H1 (cell line): ENCODE measurements at regions of chr11 and their contacts with region 1.

Region 1: DNA sequence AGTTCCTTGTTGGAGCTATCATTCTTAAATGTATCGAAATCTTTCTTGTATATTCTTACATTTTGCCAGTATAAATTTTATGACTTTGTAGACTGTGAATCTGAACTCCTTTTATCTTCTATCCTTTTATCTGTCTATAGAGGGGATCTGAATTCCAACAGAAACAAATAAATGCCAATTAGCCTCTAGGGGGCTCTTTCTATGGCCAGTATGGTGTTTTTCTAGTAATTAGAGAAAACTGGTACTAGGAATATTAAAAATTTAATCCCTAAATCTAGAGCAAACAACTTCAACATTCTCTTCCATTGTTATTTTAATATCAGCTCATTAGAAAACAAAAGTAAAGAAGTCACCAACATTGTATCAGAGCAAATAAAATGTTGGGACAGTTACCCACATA is 21.5 kb upstream of the CAT start:
- DNase-seq: no peak
- H3K4me3 ChIP-seq: no peak overlapping the region
- H3K27ac ChIP-seq: no peak overlapping the region
- H3K4me1 ChIP-seq: no peaks in the 10 kb centered on the region
- H3K27me3 ChIP-seq: no peaks in the 10 kb centered on the region
- CTCF ChIP-seq: peak in 2 of 3 experiments; percentile 12 to 18; a peak in 2 of 4 replicates
- EP300 ChIP-seq: no peak
- POLR2A ChIP-seq: no peak
- RAD21 ChIP-seq: no peak

Region 2: GRCh38 chr11:34380696-34381095 is 36.5 kb before region 1 on chr11:
- CTCF ChIA-PET with region 1: no interaction called
- POLR2A ChIA-PET with region 1: no interaction called
- DNase-seq: no peak
- H3K4me3 ChIP-seq: no peak overlapping the region
- H3K27ac ChIP-seq: no peak overlapping the region
- H3K4me1 ChIP-seq: no peaks in the 10 kb centered on the region
- H3K27me3 ChIP-seq: no peaks in the 10 kb centered on the region
- CTCF ChIP-seq: no peak
- EP300 ChIP-seq: no peak
- POLR2A ChIP-seq: no peak
- RAD21 ChIP-seq: no peak

Region 3: GRCh38 chr11:34395916-34396550 is 21.2 kb before region 1 on chr11:
- CTCF ChIA-PET with region 1: interaction called, 11 read pairs
- POLR2A ChIA-PET with region 1: no interaction called
- DNase-seq: no peak
- H3K4me3 ChIP-seq: no peak overlapping the region
- H3K27ac ChIP-seq: no peak overlapping the region
- H3K4me1 ChIP-seq: peaks cover 0 to 2% (median 0%) of the 10 kb centered on the region in 4 experiments; a peak in 1 of 7 replicates
- H3K27me3 ChIP-seq: no peaks in the 10 kb centered on the region
- CTCF ChIP-seq: no peak
- EP300 ChIP-seq: no peak
- POLR2A ChIP-seq: no peak
- RAD21 ChIP-seq: no peak

Region 4: DNA sequence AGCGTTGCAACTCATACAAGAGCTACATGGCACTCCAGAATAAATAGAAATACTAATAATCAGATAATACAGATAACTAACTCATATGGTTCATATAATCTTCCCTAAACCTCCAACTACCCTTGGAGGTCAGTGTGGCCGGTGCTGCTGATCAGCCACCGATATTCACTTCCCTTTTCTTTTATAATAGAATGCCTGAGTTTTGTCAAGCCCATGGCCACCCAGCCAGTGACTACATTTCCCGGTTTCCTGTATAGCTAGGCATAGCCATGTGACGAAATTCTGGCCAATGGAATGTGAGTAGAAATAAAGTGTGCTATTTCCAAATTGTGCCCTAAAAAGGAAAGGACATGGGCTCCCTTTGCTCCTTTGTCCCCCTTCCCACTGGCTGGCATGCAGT is 15.6 kb after region 1 on chr11:
- CTCF ChIA-PET with region 1: interaction called, 29 read pairs
- POLR2A ChIA-PET with region 1: no interaction called
- DNase-seq: no peak
- H3K4me3 ChIP-seq: no peak overlapping the region
- H3K27ac ChIP-seq: no peak overlapping the region
- H3K4me1 ChIP-seq: no peaks in the 10 kb centered on the region
- H3K27me3 ChIP-seq: peaks cover 0 to 1% (median 0%) of the 10 kb centered on the region in 4 experiments; a peak in 1 of 7 replicates
- CTCF ChIP-seq: no peak
- EP300 ChIP-seq: no peak
- POLR2A ChIP-seq: no peak
- RAD21 ChIP-seq: no peak